Right ventricle myocardium inferior (tissue), 1 donor: ENCODE measurements at regions of chr22 and their contacts with region 1.

Region 1: DNA sequence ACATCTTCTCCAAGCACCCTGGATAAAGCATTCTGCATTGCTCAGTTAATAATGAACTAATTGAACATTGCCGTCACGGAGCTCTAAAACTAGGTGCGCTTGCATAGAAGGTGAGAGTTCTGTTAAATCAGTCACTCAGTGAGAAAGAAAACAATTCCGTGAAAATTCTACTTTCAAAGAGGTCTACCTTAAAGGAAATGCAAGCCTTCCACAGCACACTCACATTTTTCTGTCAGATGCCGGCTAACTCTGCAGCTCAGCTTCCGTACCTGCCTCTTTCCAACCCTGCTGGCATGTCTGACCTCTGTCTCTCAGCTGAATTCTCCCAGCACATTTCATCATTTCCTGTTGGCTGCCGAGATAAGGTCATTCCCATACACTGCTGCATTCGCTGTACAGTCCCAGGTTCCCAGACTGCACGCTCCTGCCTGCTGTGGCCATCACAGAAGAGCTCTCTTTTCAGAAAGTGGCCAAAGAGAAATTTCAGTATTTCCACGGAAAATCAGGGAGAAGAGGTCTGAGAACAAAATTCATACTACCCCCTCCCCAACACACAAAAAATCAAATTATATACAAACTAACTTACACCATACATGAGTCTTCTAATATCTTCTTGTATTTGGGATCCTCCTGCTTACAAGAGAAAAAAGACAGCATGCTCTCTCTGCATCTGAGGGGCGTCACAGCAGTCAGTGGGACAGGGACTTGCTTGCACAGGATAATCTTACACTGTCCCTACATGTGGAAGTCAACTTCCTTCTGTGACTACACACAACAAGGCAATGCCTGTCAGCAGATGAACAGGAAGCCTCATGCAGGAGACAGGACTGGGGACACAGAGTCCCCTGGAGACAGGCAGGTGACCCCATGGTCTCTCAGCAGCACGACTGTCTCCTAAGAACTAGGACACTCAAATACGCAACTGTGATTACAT is 55.1 kb downstream of the PACSIN2 start:
- DNase-seq: peak; percentile 75
- ATAC-seq: peak; percentile 89

Region 2: DNA sequence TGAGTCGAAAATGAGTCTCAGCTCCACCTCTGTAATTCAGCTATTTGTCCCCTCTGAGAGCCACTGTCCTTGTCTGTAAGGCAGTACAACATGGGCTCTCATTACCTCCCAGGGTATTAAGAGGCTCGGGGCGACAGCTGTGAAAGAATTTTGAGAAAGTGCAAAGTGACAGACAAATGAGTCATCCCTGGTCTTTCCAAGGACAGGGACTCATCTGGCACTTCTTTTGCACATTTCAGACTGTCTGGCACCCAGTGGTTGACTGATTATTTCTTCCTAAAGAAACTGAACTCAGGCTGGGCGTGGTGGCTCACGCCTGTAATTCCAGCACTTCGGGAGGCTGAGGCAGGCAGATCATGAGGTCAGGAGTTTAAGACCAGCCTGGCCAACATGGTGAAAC is 40.6 kb before region 1 on chr22:
- intact Hi-C with region 1: loop called (anchors 5 kb)
- DNase-seq: no peak
- ATAC-seq: no peak

Region 3: DNA sequence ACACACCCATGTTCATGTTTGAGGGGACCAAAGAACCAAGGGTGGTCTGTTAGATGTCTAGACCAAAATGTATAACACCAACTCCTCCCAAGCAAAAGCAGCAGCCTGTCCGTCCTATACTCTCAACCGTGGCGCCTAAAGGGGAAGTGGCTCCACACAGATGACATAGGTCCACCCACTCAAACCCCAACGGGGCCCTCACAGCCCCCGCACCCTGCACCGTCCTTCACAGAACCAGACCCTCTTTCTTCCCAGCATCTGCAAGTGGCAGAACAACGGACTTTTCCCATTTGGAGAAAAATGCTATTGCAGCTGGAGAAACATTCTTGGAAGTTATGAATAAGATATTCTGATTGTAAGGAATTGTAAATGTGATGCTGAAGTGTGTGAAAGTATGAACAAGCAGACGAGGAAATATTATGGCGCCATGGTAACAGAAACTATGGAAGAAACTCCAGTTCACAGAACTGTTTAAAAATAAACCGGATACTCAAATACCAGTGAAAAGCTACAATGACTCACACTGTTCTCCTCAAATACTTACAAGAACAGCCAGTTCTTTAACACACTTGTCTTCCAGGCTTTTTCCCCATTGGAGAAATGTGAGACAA is 26.3 kb before region 1 on chr22:
- intact Hi-C with region 1: loop called (anchors 1 kb)
- DNase-seq: no peak
- ATAC-seq: peak; percentile 49

Region 4: DNA sequence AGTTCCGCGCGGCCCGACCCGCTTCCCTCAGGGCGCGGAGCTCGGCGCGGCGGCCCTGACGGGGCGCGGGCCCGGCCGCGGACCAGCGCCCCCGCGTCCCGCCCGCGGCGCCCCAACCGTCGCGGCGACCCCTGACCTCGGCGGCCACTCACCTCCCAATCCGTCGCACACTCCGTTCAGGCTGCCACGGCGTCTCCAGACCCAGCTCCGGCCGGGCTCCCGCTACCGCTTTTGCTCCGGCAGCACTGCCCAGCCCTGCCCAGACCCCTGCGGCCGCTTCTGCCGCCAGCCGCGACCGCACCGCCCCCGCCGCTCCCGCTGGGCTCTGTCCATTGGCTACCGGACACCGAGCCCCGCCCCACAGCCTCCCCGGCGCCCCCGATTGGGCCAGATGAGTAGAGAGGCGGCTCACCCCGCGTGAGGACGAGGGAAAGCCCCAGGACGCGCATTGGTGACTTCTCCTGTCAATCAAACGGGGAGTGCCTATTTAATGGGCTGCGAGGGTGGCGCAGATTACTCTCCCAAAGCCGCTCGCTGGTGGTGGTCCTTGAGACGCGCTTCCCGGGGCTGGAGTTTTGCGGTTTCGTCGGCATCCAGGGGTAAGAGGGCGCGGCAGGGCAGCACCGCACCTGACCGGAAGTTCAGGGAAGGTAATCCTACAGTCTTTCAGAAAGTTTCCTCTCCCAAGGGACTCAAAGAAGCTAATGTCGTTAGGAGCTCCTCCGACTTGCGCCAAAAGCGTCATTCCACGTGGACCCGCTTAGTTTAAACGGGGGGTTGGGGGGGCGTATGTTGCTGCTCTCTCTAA is 55.2 kb after region 1 on chr22 and contains the start of gene PACSIN2:
- intact Hi-C with region 1: loop called (anchors 10 kb)
- DNase-seq: peak; percentile 100
- ATAC-seq: peak; percentile 100
- total RNA-seq, gene PACSIN2: 64.9 TPM